Prostate gland (tissue), 2 donors: ENCODE measurements at regions of chr6 and their contacts with region 1.

Region 1: DNA sequence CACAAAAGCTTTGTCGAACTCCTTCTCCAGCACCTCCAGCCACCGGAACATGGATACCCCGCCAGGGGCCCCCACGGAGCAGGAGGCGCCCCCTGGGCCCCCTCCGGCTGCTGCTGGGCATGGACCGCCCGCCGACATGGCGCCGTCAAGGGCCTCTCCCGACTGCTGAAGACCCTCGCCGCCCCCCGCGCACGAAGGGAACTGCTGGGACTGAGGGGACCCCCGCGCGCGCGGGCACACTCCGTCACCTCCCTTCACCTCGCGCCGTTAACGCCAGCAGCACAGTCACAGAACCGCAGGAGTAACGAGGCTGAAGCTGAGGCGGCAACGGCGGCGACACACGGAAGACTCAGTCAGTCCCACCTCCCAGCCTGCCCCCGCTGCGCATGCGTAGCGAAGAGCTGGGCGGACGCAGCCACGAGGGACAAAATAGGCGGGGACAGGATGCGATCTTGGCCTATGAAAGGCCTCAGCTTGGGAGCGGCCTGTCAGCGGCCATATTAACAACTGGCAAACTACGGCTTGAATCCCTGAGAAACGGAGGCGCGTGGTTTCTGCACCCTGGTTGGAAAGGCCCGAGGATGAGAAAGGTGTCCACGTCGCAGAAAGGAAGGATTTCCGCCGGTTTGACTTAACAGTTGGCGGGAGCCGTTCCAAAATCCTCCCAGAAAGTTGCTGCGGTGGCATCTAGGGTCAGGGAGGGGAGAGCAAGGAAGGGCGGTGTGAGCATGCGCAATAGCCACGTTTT is at the start of gene GOPC:
- DNase-seq: peak; percentile 94
- H3K4me3 ChIP-seq: peak within 1 kb of the TSS; percentile 79 to 80
- H3K27ac ChIP-seq: peak within 1 kb of the TSS; percentile 89 to 91
- H3K4me1 ChIP-seq: no peaks in the 10 kb centered on the region
- H3K27me3 ChIP-seq: no peaks in the 10 kb centered on the region
- CTCF ChIP-seq: peak in 1 of 4 experiments; percentile 24
- POLR2A ChIP-seq: peak; percentile 83
- total RNA-seq, gene GOPC: 20.2 to 24.2 TPM

Region 2: GRCh38 chr6:117346142-117346930 is 256.0 kb before region 1 on chr6:
- intact Hi-C with region 1: loop called (anchors 10 kb)
- DNase-seq: no peak
- H3K4me3 ChIP-seq: no peak overlapping the region
- H3K27ac ChIP-seq: no peak overlapping the region
- H3K4me1 ChIP-seq: no peaks in the 10 kb centered on the region
- H3K27me3 ChIP-seq: no peaks in the 10 kb centered on the region
- CTCF ChIP-seq: peak in 3 of 4 experiments; percentile 51 to 56 (median 54)
- POLR2A ChIP-seq: no peak

Region 3: GRCh38 chr6:117555882-117556498 is 46.3 kb before region 1 on chr6:
- intact Hi-C with region 1: loop called (anchors 5 kb)
- DNase-seq: peak; percentile 36
- H3K4me3 ChIP-seq: no peak overlapping the region
- H3K27ac ChIP-seq: no peak overlapping the region
- H3K4me1 ChIP-seq: no peaks in the 10 kb centered on the region
- H3K27me3 ChIP-seq: no peaks in the 10 kb centered on the region
- CTCF ChIP-seq: peak; percentile 63 to 95 (median 80)
- POLR2A ChIP-seq: no peak

Region 4: DNA sequence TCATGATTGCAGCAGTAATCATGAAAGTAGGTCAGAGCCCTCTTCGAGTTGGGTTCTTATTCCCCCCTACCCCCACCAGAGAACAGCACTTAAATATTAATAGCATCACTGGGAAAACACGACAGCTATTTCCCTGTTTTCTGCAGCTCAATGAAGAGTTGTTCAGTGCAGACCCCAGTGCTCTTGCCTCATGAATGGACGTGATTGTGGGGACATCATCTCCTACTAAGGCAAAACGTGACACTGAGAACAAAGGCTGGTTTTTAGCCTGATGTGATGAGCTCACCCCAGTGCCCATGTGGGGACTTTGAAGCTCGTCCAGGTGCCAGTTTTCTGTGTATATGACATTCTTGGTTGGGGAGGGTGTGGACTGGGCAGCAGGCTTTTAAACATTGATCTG is 410.6 kb after region 1 on chr6:
- intact Hi-C with region 1: no loop called
- DNase-seq: no peak
- H3K4me3 ChIP-seq: no peak overlapping the region
- H3K27ac ChIP-seq: no peak overlapping the region
- H3K4me1 ChIP-seq: no peaks in the 10 kb centered on the region
- H3K27me3 ChIP-seq: no peaks in the 10 kb centered on the region
- CTCF ChIP-seq: no peak
- POLR2A ChIP-seq: no peak